ENCODE measurements at regions of chr1 and their contacts with region 1.

Region 1: DNA sequence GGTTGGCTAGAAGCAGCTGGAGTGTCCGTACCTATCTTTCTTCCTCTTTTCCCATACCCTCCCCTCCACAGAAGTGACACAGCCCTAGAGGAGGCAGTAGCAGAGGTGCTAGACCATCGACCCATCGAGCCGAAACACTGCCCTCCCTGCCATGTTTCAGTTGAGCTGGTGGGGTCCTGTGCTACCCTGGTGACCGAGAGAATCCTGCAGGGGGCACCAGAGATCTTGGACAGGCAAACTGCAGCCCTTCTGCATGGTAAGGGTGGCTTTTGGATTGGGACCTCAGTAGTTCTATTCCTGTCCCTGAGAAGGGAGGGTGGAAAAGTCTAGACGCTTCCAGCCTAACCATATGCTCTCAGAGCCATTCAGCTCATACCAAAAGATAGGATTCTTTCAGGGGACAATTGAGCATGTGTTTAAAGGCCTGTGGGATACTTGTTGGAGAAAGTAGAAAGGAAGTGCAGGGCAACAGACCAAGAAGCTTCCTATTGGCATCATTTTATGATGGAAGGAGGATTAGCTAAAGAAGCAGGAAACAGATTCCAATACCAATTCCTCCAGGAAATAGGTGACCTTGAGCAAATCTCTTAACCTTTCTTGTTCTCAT is 11.7 kb upstream of the BNIPL start:
- DNase-seq: peak; percentile 93
- H3K4me3 ChIP-seq: no peak overlapping the region
- H3K27ac ChIP-seq: peak overlapping the region in 3 of 4 donors; percentile 3 to 35 (median 7)
- H3K4me1 ChIP-seq: peaks cover 10 to 11% (median 10%) of the 10 kb centered on the region in 4 donors
- H3K27me3 ChIP-seq: no peaks in the 10 kb centered on the region
- CTCF ChIP-seq: peak; percentile 73 to 79 (median 79)
- EP300 ChIP-seq: no peak
- POLR2A ChIP-seq: no peak

Region 2: DNA sequence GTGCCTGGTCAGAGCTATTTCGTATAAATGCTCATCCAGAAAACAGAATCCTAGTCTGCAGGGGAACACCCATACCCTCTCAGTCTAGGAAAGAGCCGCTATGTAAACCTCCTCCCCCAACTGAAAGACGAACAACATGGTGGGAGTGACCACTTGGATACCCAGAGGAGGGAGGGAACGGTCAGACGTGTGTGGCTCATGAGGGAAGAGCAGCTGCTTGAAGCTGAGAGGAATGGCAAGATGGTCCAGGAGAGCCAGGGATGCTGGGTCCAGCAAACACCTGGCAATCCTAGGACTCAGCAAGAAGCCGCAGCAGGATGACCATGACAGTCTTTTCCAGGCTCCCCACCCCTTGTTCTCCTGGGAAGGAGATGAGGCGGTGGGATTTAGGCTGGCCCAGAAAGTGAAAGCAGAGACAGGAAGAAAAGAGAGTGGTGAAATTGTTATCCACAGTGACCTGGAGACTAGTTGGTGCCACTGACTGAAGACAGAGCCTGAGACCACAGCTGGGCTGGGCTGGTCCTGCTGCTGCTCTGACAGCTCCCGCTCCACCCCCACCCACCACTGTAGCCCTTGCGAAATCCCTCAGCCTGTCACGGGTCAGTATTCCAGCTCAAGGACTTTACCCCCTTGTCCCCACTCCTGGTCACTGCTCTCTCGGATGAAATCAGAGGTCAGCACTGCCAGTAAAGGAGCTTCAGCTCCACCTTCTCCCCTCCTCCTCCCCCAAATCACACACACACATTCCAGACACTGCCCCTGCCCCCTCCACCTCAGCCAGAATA is 53.6 kb before region 1 on chr1:
- intact Hi-C with region 1: no loop called
- DNase-seq: no peak
- H3K4me3 ChIP-seq: peak overlapping the region; percentile 73 to 98 (median 90)
- H3K27ac ChIP-seq: peak overlapping the region; percentile 93 to 98 (median 98)
- H3K4me1 ChIP-seq: peaks cover 47 to 65% (median 60%) of the 10 kb centered on the region in 4 donors
- H3K27me3 ChIP-seq: no peaks in the 10 kb centered on the region
- CTCF ChIP-seq: no peak
- EP300 ChIP-seq: no peak
- POLR2A ChIP-seq: no peak

Region 3: DNA sequence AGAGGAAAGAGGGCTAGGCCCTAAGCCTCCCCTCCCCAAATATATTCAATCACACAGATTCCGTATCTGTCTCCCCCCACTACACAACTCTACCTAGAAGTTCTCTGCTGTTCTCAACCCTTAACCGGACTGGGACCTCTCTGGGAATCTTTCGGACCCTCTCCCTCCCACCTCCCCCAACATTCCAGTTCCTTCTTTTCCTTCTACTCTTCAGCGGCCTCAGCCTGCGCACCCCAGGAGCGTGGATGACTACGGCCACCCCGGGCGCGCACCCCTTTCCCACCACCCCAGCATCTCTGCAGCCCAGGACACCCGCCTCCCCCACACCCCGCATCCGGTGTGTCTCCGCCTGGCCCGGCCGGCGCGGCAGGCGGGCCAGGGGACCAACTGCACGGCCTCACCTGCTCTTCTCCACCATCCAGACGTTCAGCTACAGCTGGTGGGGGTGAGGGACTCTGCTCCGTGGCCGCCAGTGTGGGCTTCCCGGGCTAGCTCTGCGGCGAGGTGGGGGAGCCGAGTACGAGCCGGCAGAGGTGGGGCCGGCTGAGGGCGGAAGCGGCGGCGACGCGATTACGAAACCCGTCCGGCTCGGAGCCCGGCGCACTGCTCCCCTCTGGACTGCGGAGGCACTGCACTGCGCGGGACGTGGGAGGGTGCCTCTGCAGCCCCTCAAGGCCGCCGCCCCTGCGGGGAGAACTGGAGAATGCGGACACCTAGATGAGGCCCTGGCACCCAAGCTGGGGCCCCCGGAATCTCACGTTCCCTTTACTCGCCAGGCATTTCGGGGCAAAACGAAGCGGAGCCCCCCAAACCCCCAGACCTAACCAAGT is 34.6 kb after region 1 on chr1 and contains the start of gene CDC42SE1:
- intact Hi-C with region 1: loop called (anchors 5 kb)
- DNase-seq: peak; percentile 95
- H3K4me3 ChIP-seq: peak within 1 kb of the TSS; percentile 77 to 97 (median 92)
- H3K27ac ChIP-seq: peak within 1 kb of the TSS; percentile 88 to 96 (median 94)
- H3K4me1 ChIP-seq: peaks cover 35 to 53% (median 47%) of the 10 kb centered on the region in 4 donors
- H3K27me3 ChIP-seq: no peaks in the 10 kb centered on the region
- CTCF ChIP-seq: peak in 2 of 3 experiments; percentile 63 to 71
- EP300 ChIP-seq: no peak
- POLR2A ChIP-seq: peak; percentile 94
- total RNA-seq, gene CDC42SE1: 41.1 to 58.2 (median 49.6) TPM

Region 4: DNA sequence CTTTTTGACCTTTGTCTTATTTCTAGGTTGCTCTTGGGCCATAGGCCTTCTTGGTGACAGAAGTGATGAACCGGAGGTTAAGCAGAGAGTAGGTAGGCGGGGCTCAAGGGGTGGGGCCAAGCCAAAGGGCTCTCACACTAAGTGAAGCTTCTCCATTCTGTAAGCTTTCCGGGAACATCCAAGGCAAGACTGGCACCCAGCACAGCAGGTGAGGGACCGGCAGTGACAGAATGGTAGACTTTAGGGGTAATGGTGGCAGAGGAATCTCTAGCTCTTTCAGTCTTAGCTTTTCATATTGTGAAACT is 131.8 kb after region 1 on chr1 and contains the start of gene TNFAIP8L2:
- intact Hi-C with region 1: loop called (anchors 5 kb)
- DNase-seq: no peak
- H3K4me3 ChIP-seq: peak within 1 kb of the TSS; percentile 27 to 46 (median 32)
- H3K27ac ChIP-seq: peak within 1 kb of the TSS in 2 of 4 donors; percentile 3 to 25
- H3K4me1 ChIP-seq: peaks cover 5 to 19% (median 17%) of the 10 kb centered on the region in 4 donors
- H3K27me3 ChIP-seq: no peaks in the 10 kb centered on the region
- CTCF ChIP-seq: no peak
- EP300 ChIP-seq: no peak
- POLR2A ChIP-seq: no peak
- total RNA-seq, gene TNFAIP8L2: 2.8 to 8.3 (median 5.0) TPM

Region 5: DNA sequence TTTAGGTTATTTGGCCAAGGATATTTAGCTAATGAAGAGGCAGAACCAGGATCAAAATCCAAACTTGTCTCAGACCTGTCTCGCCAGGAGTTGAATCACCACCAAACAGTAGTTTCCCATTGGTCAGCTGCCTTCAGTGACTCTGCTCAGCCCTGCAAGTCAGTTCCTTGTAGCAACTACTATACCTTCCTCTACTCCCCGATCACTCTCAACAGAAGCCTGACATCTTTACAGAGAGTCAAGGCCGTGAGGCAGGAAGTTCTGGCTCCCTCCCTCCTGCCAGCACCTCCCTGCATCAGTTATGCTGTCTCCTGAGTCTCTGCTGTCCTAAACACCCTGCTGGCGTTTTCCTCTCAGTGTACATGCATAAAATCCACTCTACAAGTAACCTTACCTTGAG is 243.1 kb after region 1 on chr1:
- intact Hi-C with region 1: no loop called
- DNase-seq: no peak
- H3K4me3 ChIP-seq: no peak overlapping the region
- H3K27ac ChIP-seq: no peak overlapping the region
- H3K4me1 ChIP-seq: no peaks in the 10 kb centered on the region
- H3K27me3 ChIP-seq: no peaks in the 10 kb centered on the region
- CTCF ChIP-seq: no peak
- EP300 ChIP-seq: no peak
- POLR2A ChIP-seq: no peak